Ascending aorta (tissue), 2 donors: ENCODE measurements at regions of chr3 and their contacts with region 1.

Region 1: GRCh38 chr3:8301728-8302462 is 199.7 kb upstream of the LMCD1 start:
- DNase-seq: no peak
- H3K4me3 ChIP-seq: no peak overlapping the region
- H3K27ac ChIP-seq: no peak overlapping the region
- H3K4me1 ChIP-seq: no peaks in the 10 kb centered on the region
- H3K27me3 ChIP-seq: no peaks in the 10 kb centered on the region
- CTCF ChIP-seq: peak; percentile 25 to 71 (median 44)

Region 2: DNA sequence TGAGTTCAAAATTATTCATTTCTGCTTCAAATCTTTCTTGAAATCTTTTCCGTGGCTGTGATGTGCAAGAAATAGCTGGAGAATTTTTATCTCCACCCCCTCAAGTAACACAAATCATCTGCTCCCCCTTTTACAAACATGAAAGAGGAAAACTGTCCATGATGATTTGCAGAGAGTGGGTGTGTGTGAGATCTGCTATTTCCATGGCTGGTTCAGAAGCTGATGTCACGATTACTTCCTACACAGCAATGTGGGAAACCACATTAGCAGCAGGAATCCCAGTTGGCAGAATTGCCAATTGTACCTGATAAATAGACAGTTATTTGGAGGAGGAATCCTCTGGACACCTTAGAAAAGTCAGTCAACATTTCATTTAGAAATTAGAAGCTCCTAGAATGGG is 1516.2 kb before region 1 on chr3:
- intact Hi-C with region 1: loop called (anchors 10 kb)
- DNase-seq: no peak
- H3K4me3 ChIP-seq: no peak overlapping the region
- H3K27ac ChIP-seq: no peak overlapping the region
- H3K4me1 ChIP-seq: no peaks in the 10 kb centered on the region
- H3K27me3 ChIP-seq: no peaks in the 10 kb centered on the region
- CTCF ChIP-seq: no peak

Region 3: DNA sequence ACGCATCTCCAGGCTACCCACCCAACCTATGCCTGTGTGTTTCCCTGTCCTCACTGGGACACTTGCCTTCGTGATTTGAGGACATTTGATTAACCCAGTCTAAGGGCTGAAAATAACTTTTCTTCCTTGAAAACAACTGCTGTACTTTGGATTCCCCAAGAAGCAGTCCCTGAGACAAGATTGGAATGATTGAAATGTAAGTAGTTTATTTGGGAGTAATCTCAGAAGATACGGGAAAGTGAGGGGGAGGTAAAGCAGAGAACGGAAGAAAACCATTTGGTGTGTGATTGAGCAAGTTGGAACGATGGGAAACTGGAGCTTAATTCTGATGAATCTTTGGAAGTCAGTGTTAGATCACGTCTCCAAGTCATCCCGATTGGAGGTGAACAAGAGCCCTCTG is 56.0 kb after region 1 on chr3:
- intact Hi-C with region 1: no loop called
- DNase-seq: no peak
- H3K4me3 ChIP-seq: no peak overlapping the region
- H3K27ac ChIP-seq: no peak overlapping the region
- H3K4me1 ChIP-seq: no peaks in the 10 kb centered on the region
- H3K27me3 ChIP-seq: no peaks in the 10 kb centered on the region
- CTCF ChIP-seq: no peak

Region 4: DNA sequence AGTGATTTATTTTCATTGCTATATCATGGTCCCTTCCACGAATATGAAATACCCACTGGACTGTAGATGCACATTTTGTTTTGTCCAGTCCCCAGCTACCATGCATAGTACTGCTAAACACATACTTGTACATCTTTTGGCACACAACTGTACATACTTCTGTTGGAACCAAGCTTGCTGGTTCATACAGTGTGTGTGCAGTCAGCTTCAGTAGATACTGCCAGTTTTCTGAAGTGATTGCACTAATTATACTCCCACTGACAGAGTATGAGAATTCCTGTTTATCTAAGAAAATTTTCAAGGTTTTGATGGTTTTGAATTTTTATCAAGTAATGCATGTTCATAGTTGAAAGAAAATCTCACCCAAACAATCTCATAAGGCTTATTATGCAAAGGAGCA is 99.0 kb after region 1 on chr3:
- intact Hi-C with region 1: no loop called
- DNase-seq: no peak
- H3K4me3 ChIP-seq: no peak overlapping the region
- H3K27ac ChIP-seq: no peak overlapping the region
- H3K4me1 ChIP-seq: no peaks in the 10 kb centered on the region
- H3K27me3 ChIP-seq: no peaks in the 10 kb centered on the region
- CTCF ChIP-seq: no peak